ENCODE measurements at regions of chr2 and their contacts with region 1.

Region 1: GRCh38 chr2:170950221-170950761 is 21.2 kb downstream of the GORASP2 start:
- DNase-seq: no peak
- H3K4me3 Mint-ChIP-seq: no peak overlapping the region
- H3K27ac Mint-ChIP-seq: no peak overlapping the region
- H3K4me1 Mint-ChIP-seq: peaks cover 13% of the 10 kb centered on the region
- H3K27me3 Mint-ChIP-seq: no peaks in the 10 kb centered on the region
- CTCF ChIP-seq: no peak

Region 2: GRCh38 chr2:170940066-170940465 is 10.2 kb before region 1 on chr2:
- CTCF ChIA-PET with region 1: interaction called, 10 read pairs
- POLR2A ChIA-PET with region 1: interaction called, 8 read pairs
- intact Hi-C with region 1: no loop called
- DNase-seq: no peak
- H3K4me3 Mint-ChIP-seq: no peak overlapping the region
- H3K27ac Mint-ChIP-seq: peak overlapping the region; percentile 44
- H3K4me1 Mint-ChIP-seq: peaks cover 32% of the 10 kb centered on the region
- H3K27me3 Mint-ChIP-seq: no peaks in the 10 kb centered on the region
- CTCF ChIP-seq: no peak

Measured in MCF 10A (cell line).